Heart left ventricle (tissue), 16 donors: ENCODE measurements at regions of chr15 and their contacts with region 1.

Region 1: DNA sequence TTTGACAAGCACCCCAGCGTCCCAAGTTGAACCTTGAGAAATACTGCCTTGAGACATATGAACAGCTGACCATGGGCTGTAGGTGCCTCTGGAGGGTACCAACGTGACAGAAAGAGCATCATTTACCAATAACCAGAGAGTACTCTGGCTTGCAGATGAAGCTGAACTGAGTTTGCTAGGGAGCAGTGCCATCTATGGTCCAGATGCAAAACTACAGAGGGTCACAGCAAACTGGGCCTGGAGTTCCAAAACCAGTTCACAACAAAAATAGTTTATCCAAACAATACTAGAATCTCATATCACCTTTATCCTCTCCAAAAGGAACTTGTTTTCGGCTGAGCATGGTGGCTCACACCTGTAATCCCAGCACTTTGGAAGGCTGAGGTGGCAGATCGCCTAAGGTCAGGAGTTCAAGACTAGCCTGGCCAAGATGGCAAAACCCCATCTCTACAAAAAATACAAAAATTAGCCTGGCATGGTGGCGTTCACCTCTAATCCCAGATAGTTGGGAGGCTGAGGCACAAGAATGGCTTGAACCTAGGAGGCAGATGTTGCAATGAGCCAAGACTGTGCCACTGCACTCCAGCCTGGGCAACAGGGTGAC is 69.3 kb downstream of the CHAC1 start:
- DNase-seq: peak in 2 of 5 donors; percentile 22 to 36
- ATAC-seq: peak in 3 of 4 donors; percentile 57 to 78 (median 77)
- H3K4me3 ChIP-seq: no peak overlapping the region
- H3K27ac ChIP-seq: no peak overlapping the region
- H3K4me1 ChIP-seq: peaks cover 0 to 48% (median 20%) of the 10 kb centered on the region in 12 donors
- H3K27me3 ChIP-seq: no peaks in the 10 kb centered on the region
- CTCF ChIP-seq: peak; percentile 46 to 82 (median 70)
- POLR2A ChIP-seq: no peak

Region 2: GRCh38 chr15:40857601-40858341 is 164.8 kb before region 1 on chr15:
- intact Hi-C with region 1: loop called in 1 of 10 experiments (anchors 5 kb)
- DNase-seq: peak; percentile 53 to 87 (median 63)
- ATAC-seq: peak; percentile 60 to 90 (median 82)
- H3K4me3 ChIP-seq: no peak overlapping the region
- H3K27ac ChIP-seq: no peak overlapping the region
- H3K4me1 ChIP-seq: peaks cover 0 to 11% (median 0%) of the 10 kb centered on the region in 12 donors
- H3K27me3 ChIP-seq: peaks cover 0 to 20% (median 0%) of the 10 kb centered on the region in 9 donors
- CTCF ChIP-seq: peak; percentile 89 to 95 (median 92)
- POLR2A ChIP-seq: no peak

Region 3: DNA sequence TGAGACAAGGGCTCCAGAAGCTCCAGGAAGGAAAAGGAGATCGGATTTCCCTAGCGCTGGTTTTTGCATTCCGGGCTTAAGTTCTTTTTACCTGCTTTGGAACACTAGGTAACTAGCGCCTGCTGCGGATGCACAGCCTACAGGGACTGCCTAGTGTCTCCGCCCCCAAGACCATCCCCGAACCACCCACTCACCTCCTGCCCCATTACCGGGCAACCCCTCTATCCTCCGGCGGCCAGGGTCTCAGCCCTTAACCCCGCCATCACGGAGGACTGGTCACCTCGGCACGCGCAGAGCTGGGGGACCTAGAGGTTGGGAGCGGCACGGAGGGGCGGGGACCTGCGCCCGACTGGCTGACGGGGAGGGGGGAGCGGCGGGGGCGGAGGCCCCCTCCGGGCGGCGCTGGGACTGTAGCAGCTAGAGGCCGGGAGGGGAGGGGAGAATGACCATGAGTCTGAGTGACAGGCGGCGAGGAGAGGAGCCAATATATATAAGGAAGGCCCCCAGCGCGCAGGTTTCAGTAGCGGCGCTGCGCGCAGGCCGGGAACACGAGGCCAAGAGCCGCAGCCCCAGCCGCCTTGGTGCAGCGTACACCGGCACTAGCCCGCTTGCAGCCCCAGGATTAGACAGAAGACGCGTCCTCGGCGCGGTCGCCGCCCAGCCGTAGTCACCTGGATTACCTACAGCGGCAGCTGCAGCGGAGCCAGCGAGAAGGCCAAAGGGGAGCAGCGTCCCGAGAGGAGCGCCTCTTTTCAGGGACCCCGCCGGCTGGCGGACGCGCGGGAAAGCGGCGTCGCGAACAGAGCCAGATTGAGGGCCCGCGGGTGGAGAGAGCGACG is 93.5 kb before region 1 on chr15 and contains the start of gene DLL4:
- intact Hi-C with region 1: loop called in 1 of 10 experiments (anchors 5 kb)
- DNase-seq: peak; percentile 74 to 88 (median 82)
- ATAC-seq: peak; percentile 61 to 78 (median 65)
- H3K4me3 ChIP-seq: peak within 1 kb of the TSS; percentile 22 to 85 (median 70)
- H3K27ac ChIP-seq: peak within 1 kb of the TSS; percentile 51 to 90 (median 77)
- H3K4me1 ChIP-seq: peaks cover 3 to 80% (median 54%) of the 10 kb centered on the region in 12 donors
- H3K27me3 ChIP-seq: peaks cover 3 to 79% (median 23%) of the 10 kb centered on the region in 9 donors
- CTCF ChIP-seq: peak in 1 of 12 donors; percentile 11
- POLR2A ChIP-seq: peak in 1 of 2 donors; percentile 95
- total RNA-seq, gene DLL4: 4.7 to 20.8 (median 13.5) TPM

Region 4: GRCh38 chr15:40941528-40942336 is 80.9 kb before region 1 on chr15:
- intact Hi-C with region 1: loop called in 9 of 10 experiments (anchors 2 to 10 kb)
- DNase-seq: peak; percentile 86 to 92 (median 87)
- ATAC-seq: peak; percentile 22 to 83 (median 79)
- H3K4me3 ChIP-seq: peak overlapping the region; percentile 41 to 70 (median 59)
- H3K27ac ChIP-seq: peak overlapping the region; percentile 83 to 96 (median 92)
- H3K4me1 ChIP-seq: peaks cover 7 to 60% (median 48%) of the 10 kb centered on the region in 12 donors
- H3K27me3 ChIP-seq: no peaks in the 10 kb centered on the region
- CTCF ChIP-seq: peak; percentile 29 to 96 (median 67)
- POLR2A ChIP-seq: no peak

Region 5: GRCh38 chr15:40974879-40975278 is 47.7 kb before region 1 on chr15:
- intact Hi-C with region 1: loop called in 1 of 10 experiments (anchors 5 kb)
- DNase-seq: no peak
- ATAC-seq: no peak
- H3K4me3 ChIP-seq: no peak overlapping the region
- H3K27ac ChIP-seq: no peak overlapping the region
- H3K4me1 ChIP-seq: peaks cover 0 to 4% (median 0%) of the 10 kb centered on the region in 12 donors
- H3K27me3 ChIP-seq: no peaks in the 10 kb centered on the region
- CTCF ChIP-seq: no peak
- POLR2A ChIP-seq: no peak

Region 6: GRCh38 chr15:40999190-40999589 is 23.4 kb before region 1 on chr15:
- intact Hi-C with region 1: no loop called
- DNase-seq: no peak
- ATAC-seq: no peak
- H3K4me3 ChIP-seq: no peak overlapping the region
- H3K27ac ChIP-seq: no peak overlapping the region
- H3K4me1 ChIP-seq: peaks cover 0 to 7% (median 0%) of the 10 kb centered on the region in 12 donors
- H3K27me3 ChIP-seq: no peaks in the 10 kb centered on the region
- CTCF ChIP-seq: no peak
- POLR2A ChIP-seq: no peak

Region 7: DNA sequence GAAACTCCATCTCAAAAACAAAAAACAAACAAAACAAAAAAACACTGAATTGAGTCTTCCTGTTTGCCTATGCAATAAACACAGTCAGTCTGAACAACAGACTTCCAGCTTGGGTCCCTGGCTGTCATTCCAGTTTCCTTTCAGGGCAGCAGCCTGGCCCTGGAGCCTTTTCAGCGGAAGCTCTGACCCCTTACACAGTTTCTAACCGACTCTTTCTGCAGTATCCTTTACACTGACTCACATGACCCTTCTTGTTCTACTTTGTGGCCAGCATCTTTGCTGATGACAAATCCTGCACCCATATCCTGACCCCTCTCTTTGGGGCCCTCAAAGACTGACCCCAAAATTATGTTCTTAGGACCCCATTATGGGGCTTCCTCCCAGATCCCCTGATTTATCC is 131.8 kb after region 1 on chr15:
- intact Hi-C with region 1: no loop called
- DNase-seq: no peak
- ATAC-seq: no peak
- H3K4me3 ChIP-seq: no peak overlapping the region
- H3K27ac ChIP-seq: no peak overlapping the region
- H3K4me1 ChIP-seq: no peaks in the 10 kb centered on the region
- H3K27me3 ChIP-seq: peaks cover 0 to 5% (median 0%) of the 10 kb centered on the region in 9 donors
- CTCF ChIP-seq: no peak
- POLR2A ChIP-seq: no peak

Region 8: DNA sequence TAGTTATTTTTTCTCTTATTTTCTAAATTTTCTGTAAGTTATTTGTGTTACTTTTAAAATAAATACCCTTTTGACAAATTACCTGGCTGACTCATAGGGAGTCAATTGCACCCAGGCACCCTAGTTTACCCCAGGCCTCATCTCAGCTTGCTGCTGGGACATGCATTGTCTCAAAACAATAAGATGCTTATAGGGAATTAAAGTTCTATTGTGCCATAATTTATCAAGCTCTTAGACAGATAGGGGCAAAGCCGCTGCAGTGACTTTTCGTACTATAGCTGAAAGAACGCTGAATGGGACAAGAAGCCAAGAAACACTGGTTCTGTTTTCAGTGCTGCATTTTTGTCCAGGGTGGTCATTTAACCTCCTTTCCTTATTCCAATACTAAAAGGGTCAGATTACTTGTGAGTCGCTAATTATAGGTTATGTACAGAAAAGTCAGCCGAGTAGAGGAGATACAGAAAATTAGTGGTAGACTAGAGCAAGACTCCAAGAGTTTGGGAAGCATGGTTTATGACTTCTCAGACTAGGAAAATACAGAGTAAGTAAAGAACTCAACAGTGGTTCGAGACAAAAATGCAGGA is 157.7 kb after region 1 on chr15:
- intact Hi-C with region 1: loop called in 2 of 10 experiments (anchors 5 to 10 kb)
- DNase-seq: no peak
- ATAC-seq: no peak
- H3K4me3 ChIP-seq: no peak overlapping the region
- H3K27ac ChIP-seq: no peak overlapping the region
- H3K4me1 ChIP-seq: no peaks in the 10 kb centered on the region
- H3K27me3 ChIP-seq: peaks cover 0 to 5% (median 0%) of the 10 kb centered on the region in 9 donors
- CTCF ChIP-seq: no peak
- POLR2A ChIP-seq: no peak